Vagina (tissue), 2 donors: ENCODE measurements at regions of chr14 and their contacts with region 1.

Region 1: DNA sequence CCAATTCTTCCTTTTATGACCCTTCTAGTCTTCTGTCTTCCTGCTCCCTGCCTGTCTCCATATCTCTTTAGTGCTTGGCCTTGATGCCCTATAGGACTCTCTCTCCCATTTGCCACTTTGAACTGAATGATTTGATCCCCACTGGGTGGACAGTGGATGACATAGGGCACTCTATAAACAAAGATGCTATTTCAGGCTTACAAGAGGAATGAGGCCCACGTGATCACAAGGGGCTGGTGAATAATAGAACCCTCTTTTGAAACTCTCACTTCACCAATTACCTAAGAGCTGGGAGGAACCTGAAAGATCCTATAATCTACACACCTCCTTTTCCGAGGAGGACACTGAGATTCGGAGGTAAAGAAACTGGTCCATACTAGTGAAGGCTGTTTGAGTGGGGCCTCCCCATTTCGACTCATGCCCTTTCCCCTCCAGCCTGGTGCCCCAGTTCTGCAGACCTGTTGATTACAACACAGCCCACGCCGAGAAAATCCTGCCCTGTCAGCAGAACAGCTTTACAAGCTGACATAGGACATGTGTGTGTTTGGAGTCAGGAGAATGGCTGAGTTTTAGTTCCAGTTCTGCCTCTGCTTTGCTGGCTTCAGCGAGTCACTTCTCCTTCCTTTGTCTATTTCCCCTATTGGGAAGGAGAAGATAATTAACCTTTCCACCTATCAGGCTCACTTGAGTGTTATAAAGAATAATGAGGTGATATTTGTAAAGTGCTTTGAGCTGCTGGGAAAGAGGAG is 400.3 kb downstream of the ZFP36L1 start:
- DNase-seq: no peak
- H3K4me3 ChIP-seq: no peak overlapping the region
- H3K27ac ChIP-seq: peak overlapping the region; percentile 77
- H3K4me1 ChIP-seq: peaks cover 52% of the 10 kb centered on the region
- H3K27me3 ChIP-seq: no peaks in the 10 kb centered on the region
- CTCF ChIP-seq: no peak
- POLR2A ChIP-seq: no peak

Region 2: GRCh38 chr14:68466491-68467032 is 74.0 kb after region 1 on chr14:
- intact Hi-C with region 1: loop called (anchors 10 kb)
- DNase-seq: no peak
- H3K4me3 ChIP-seq: no peak overlapping the region
- H3K27ac ChIP-seq: peak overlapping the region; percentile 60
- H3K4me1 ChIP-seq: peaks cover 11% of the 10 kb centered on the region
- H3K27me3 ChIP-seq: no peaks in the 10 kb centered on the region
- CTCF ChIP-seq: no peak
- POLR2A ChIP-seq: no peak